Mucosa of descending colon (tissue), 3 donors: ENCODE measurements at regions of chr3 and their contacts with region 1.

Region 1: DNA sequence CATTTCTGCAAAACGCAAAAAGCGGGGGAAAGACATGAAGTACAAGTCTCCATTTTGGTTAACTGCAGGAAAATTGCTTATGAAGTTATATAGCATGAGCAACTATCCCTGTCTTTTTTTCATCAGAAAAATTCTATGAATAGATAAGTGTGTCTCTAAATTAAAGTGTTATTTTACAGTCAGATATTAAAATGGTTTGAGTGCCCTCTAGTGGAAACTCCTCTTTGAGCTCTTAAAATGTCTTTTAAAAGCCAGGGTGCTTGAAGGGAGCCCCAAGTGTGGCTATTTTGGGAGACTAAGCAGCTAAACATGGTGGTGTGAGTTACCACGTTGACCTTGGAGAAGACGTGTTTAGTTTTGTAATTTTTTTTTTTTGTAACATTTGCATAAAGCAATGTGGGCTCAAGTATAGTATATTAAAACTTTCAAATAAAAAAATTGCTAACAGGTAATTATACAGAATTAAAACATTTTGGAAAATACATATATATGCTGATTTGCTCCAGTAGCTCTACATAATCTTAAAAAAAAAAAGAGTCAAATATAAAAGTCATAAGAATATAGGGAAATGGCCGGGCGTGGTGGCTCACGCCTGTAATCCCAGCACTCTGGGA is 77.2 kb downstream of the PPP2R3A start:
- DNase-seq: peak in 1 of 3 donors; percentile 22
- ATAC-seq: no peak
- H3K4me3 ChIP-seq: no peak overlapping the region
- H3K4me1 ChIP-seq: no peaks in the 10 kb centered on the region
- CTCF ChIP-seq: no peak

Region 2: DNA sequence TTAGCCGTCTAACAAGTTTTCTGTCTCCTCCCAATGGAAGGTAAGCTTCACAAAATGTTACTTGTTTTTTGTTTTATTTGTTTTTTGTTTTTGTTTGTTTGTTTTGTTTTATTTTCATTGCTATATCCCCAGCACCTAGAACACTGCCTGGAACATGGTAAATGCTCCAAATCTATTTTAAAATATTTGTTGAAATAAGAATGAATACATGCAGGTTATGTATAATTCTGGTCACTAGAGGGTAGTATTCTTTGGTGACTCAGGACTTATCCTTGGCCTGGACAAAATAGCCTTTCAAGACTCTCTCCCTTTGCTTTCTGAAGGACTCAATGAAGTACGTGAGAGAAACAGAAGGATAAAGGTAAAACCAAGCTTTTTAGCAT is 124.1 kb before region 1 on chr3:
- intact Hi-C with region 1: loop called (anchors 1 to 5 kb)
- DNase-seq: no peak
- ATAC-seq: peak; percentile 50
- H3K4me3 ChIP-seq: no peak overlapping the region
- H3K4me1 ChIP-seq: no peaks in the 10 kb centered on the region
- CTCF ChIP-seq: peak; percentile 10

Region 3: GRCh38 chr3:136428167-136428566 is 385.5 kb after region 1 on chr3:
- intact Hi-C with region 1: no loop called
- DNase-seq: no peak
- ATAC-seq: no peak
- H3K4me3 ChIP-seq: no peak overlapping the region
- H3K4me1 ChIP-seq: no peaks in the 10 kb centered on the region
- CTCF ChIP-seq: no peak